ENCODE measurements at regions of chr10 and their contacts with region 1.

Region 1: DNA sequence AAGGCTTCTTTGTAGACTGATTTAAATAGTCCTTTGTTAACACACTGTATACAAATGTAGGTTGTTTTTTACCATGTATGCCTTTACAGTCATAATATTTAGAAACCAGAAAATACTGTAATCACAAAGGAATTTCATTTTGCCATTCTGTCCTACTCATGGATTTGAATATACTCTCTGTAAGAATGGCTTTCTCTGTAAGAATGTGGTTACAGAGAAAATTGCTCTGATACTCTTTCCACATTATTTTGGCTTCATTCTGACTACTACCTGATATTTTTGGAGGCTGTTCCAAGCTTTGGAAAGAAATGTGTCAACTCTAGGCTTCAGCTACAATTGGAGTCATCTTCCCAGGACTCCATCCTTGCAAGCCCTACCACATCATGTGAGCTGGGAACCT is 23.5 kb downstream of the CH25H start:
- DNase-seq: no peak
- ATAC-seq: no peak
- H3K4me3 ChIP-seq: no peak overlapping the region
- H3K27ac ChIP-seq: no peak overlapping the region
- H3K4me1 ChIP-seq: no peaks in the 10 kb centered on the region
- H3K27me3 ChIP-seq: no peaks in the 10 kb centered on the region
- CTCF ChIP-seq: no peak

Region 2: DNA sequence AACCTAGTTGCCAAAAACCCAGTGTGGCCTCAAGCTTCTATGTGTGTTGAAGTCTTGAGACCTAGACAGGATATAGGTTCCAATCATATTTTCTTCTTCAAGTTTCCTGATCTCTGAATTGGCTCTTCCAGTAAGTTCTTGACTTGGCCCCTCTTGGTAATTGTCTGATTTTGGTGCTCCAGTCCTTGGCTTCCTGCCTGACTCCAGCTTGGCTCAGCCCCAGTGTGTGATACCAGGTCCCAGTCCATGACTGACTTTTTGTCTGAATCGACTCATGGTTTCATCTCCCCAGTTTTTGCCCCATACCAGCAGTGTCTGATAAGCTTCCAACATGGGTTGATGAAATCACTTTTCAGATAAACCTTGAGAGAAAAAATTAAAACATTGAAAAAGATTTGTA is 120.7 kb before region 1 on chr10:
- CTCF ChIA-PET with region 1: no interaction called
- POLR2A ChIA-PET with region 1: no interaction called
- intact Hi-C with region 1: loop called (anchors 10 kb)
- DNase-seq: no peak
- ATAC-seq: no peak
- H3K4me3 ChIP-seq: no peak overlapping the region
- H3K27ac ChIP-seq: no peak overlapping the region
- H3K4me1 ChIP-seq: no peaks in the 10 kb centered on the region
- H3K27me3 ChIP-seq: no peaks in the 10 kb centered on the region
- CTCF ChIP-seq: no peak

Region 3: GRCh38 chr10:89165923-89166322 is 17.6 kb before region 1 on chr10:
- CTCF ChIA-PET with region 1: no interaction called
- POLR2A ChIA-PET with region 1: interaction called, 14 read pairs
- intact Hi-C with region 1: no loop called
- DNase-seq: peak; percentile 43
- ATAC-seq: no peak
- H3K4me3 ChIP-seq: no peak overlapping the region
- H3K27ac ChIP-seq: no peak overlapping the region
- H3K4me1 ChIP-seq: no peaks in the 10 kb centered on the region
- H3K27me3 ChIP-seq: no peaks in the 10 kb centered on the region; the same call in 1 of the 2 replicates
- CTCF ChIP-seq: no peak

Region 4: GRCh38 chr10:89431977-89432376 is 248.4 kb after region 1 on chr10:
- CTCF ChIA-PET with region 1: no interaction called
- POLR2A ChIA-PET with region 1: no interaction called
- intact Hi-C with region 1: no loop called
- DNase-seq: peak; percentile 89
- ATAC-seq: 0 out of 2 replicates have a peak, but pooled peaks have one; percentile 18
- H3K4me3 ChIP-seq: no peak overlapping the region
- H3K27ac ChIP-seq: no peak overlapping the region
- H3K4me1 ChIP-seq: peaks cover 29% of the 10 kb centered on the region
- H3K27me3 ChIP-seq: no peaks in the 10 kb centered on the region
- CTCF ChIP-seq: no peak

Measured in PC-3 (cell line).